ENCODE measurements at regions of chr9 and their contacts with region 1.

Region 1: DNA sequence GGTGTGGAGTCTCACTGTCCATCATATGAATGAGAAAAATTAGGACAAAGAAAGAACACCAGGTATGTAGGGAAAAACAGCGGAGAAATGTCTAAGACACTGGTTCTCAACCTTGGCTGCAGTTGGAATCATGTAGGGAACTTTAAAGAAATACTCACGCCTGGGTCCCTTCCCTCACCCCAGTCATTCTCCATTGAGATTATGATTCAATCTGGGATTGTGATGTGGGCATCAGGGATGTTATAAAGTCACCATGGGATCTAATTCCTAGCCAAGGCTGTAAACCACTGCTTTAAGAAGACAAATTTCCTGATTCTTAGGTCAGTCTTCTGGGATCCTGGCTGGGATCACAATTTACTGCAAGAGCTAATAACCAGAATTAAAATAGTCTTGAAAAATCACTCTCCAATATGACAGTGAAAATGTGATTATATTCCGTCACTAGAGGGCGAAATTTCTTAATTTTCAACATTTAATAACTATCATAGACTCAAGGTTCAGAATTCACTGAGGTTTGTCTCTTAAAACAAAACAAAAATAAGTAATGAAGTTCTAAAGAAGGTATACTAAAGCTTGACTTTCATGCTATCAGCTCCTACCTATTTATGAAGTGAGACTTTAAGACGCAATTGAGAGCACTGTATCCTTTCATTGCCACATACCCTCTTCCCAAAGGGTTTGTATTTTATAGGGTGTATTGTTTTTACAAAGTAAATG is 60.5 kb downstream of the GLDC start:
- DNase-seq: no peak
- H3K4me3 ChIP-seq: no peak overlapping the region
- H3K27ac ChIP-seq: no peak overlapping the region
- H3K4me1 ChIP-seq: 0 out of 2 replicates have a peak, but pooled peaks cover under 1% of the 10 kb centered on the region
- H3K27me3 ChIP-seq: no peaks in the 10 kb centered on the region
- CTCF ChIP-seq: peak; percentile 67

Region 2: DNA sequence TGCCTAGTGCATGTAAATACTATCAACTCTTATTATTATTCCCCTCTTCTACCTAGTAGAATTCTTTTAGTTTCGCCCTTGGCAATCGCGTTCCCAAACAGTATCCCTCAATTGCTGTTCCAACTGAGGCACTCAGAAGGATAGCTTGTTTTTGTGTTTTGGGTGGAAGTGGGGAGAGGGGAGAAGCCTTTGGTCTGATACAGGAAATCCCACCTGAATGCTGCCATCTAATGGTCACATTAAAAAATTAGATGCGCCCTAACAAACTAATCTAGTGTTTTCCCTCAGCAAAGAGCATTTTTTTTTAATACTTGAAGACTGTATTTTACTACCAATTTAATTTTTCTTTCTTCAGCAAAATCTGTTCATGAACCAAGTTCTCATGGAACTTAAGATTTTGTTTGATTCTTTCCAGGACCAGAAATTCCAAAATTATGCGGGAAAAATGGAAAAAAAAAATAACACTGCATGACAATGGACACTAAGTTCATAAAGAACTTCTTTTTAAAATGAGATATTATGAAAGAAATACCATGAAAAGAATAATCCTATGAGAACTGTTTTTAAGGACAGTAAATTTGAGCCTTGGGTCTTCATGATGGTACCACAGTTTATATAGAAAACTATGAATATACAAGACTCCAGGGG is 82.7 kb after region 1 on chr9:
- CTCF ChIA-PET with region 1: no interaction called
- POLR2A ChIA-PET with region 1: no interaction called
- intact Hi-C with region 1: loop called (anchors 10 kb)
- DNase-seq: no peak
- H3K4me3 ChIP-seq: no peak overlapping the region
- H3K27ac ChIP-seq: no peak overlapping the region
- H3K4me1 ChIP-seq: peaks cover 15% of the 10 kb centered on the region
- H3K27me3 ChIP-seq: no peaks in the 10 kb centered on the region
- CTCF ChIP-seq: peak; percentile 69

Measured in PC-9 (cell line).